GM10248 (cell line): ENCODE measurements at regions of chr10 and their contacts with region 1.

Region 1: GRCh38 chr10:61869774-61870525 is 31.5 kb upstream of the ARID5B start:
- DNase-seq: no peak
- CTCF ChIP-seq: no peak

Region 2: DNA sequence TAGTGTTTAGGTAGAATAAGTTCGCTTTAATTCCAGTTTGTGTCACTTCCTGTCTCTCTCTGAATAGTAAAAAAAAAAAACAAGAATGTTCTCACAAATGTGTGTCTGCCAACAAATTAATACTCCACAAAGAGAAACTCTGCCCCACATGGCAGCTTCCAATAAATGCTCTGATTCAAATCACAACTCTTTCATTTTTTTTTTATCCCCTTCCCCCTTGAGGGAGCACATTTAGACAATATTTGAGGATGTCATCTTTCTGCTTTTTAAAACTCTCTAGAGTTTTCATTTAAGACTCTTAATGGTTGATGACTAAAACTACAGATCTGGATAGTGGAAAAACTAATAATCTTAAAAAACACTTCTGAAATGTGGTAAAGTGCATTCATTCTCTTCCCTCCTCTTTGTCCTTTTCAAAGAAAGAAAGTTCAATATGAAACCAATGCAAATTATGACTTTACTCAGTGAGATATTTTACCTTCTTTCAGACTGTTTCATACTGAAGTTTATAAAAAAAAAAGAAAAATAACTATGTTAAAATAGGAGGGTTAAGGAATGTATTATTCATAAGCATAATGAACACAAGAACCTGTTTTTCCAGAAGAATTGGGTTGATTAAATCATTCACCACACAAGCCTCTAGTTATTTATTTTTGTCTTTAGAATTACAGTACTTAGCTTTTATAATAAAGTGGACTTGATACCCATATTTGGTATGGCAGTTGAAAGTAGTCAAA is 73.9 kb after region 1 on chr10:
- CTCF ChIA-PET with region 1: no interaction called
- POLR2A ChIA-PET with region 1: interaction called, 11 read pairs
- DNase-seq: peak; percentile 27
- CTCF ChIP-seq: no peak

Region 3: GRCh38 chr10:61974601-61975390 is 104.8 kb after region 1 on chr10:
- CTCF ChIA-PET with region 1: no interaction called
- POLR2A ChIA-PET with region 1: no interaction called
- DNase-seq: no peak
- CTCF ChIP-seq: no peak